ENCODE measurements at regions of chr20 and their contacts with region 1.

Region 1: GRCh38 chr20:62191781-62192559 is 9.1 kb downstream of the MTG2 start:
- DNase-seq: peak in 1 of 5 donors; percentile 27
- ATAC-seq: peak in 3 of 4 donors; percentile 26 to 40 (median 29)
- H3K4me3 ChIP-seq: no peak overlapping the region
- H3K27ac ChIP-seq: no peak overlapping the region
- H3K4me1 ChIP-seq: peaks cover 4 to 22% (median 9%) of the 10 kb centered on the region in 12 donors
- H3K27me3 ChIP-seq: no peaks in the 10 kb centered on the region
- CTCF ChIP-seq: no peak
- POLR2A ChIP-seq: no peak

Region 2: DNA sequence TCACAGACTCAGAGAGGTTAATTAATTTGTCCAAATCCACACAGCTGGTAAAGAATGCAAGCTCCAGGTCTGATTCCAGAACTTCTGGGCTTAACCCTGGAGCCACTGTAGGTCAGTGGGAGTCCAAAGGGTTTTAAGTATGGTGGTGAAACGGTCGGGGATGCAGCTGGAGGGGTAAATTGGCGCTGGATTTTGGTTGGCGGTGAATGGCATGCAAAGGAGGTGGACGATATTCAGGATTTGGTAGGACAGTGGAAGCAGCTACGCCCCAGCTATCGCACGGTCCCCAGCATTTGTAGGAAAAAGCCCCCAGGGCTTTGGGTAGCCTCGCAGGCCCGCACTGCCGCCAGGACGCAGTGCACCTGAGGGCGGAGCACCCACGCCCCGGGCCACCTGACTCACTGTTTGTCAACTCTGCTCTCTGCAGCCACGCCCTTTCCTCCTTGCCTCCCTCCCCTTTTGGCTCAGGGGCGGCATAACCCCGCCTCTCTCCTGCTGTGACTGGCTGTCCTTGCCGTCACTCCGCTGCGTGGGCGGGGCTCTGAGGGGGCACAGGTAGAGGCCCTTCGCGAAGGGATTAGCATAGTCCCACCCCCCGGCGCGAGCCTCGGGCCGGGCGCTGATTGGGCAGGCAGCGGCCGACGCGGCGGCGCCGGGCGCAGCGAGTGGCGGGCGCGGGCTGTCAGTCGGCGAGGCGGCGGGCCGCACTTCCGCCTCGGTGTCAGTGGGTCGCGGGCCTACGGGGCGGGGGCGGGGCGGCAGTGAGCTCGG is 46.0 kb after region 1 on chr20 and contains the start of gene OSBPL2:
- intact Hi-C with region 1: loop called in 3 of 10 experiments (anchors 5 to 10 kb)
- DNase-seq: peak; percentile 97 to 100 (median 99)
- ATAC-seq: peak; percentile 97 to 98 (median 98)
- H3K4me3 ChIP-seq: peak within 1 kb of the TSS; percentile 63 to 96 (median 79)
- H3K27ac ChIP-seq: peak within 1 kb of the TSS; percentile 47 to 97 (median 86)
- H3K4me1 ChIP-seq: peaks cover 6 to 82% (median 45%) of the 10 kb centered on the region in 12 donors
- H3K27me3 ChIP-seq: no peaks in the 10 kb centered on the region
- CTCF ChIP-seq: no peak
- POLR2A ChIP-seq: peak; percentile 31 to 46
- total RNA-seq, gene OSBPL2: 20.7 to 57.9 (median 40.3) TPM

Region 3: GRCh38 chr20:62274332-62274950 is 82.5 kb after region 1 on chr20:
- intact Hi-C with region 1: loop called in 1 of 10 experiments (anchors 10 kb)
- DNase-seq: no peak
- ATAC-seq: peak in 3 of 4 donors; percentile 36 to 53 (median 41)
- H3K4me3 ChIP-seq: no peak overlapping the region
- H3K27ac ChIP-seq: no peak overlapping the region
- H3K4me1 ChIP-seq: peaks cover 0 to 25% (median 11%) of the 10 kb centered on the region in 12 donors
- H3K27me3 ChIP-seq: no peaks in the 10 kb centered on the region
- CTCF ChIP-seq: no peak
- POLR2A ChIP-seq: no peak